SK-N-SH (cell line): ENCODE measurements at regions of chr19 and their contacts with region 1.

Region 1: GRCh38 chr19:50784710-50785109 is 5.5 kb upstream of the ACP4 start:
- DNase-seq: no peak
- H3K4me3 ChIP-seq: no peak overlapping the region
- H3K27ac ChIP-seq: no peak overlapping the region
- H3K4me1 ChIP-seq: no peaks in the 10 kb centered on the region
- H3K27me3 ChIP-seq: peaks cover 23% of the 10 kb centered on the region
- CTCF ChIP-seq: no peak
- EP300 ChIP-seq: no peak
- RAD21 ChIP-seq: no peak

Region 2: GRCh38 chr19:50476224-50476942 is 308.3 kb before region 1 on chr19 and contains the starts of genes EMC10 and GARIN5A:
- CTCF ChIA-PET with region 1: no interaction called
- POLR2A ChIA-PET with region 1: no interaction called
- DNase-seq: peak; percentile 100
- H3K4me3 ChIP-seq: peak within 1 kb of the TSS; percentile 83 to 93
- H3K27ac ChIP-seq: peak within 1 kb of the TSS; percentile 67 to 85
- H3K4me1 ChIP-seq: peaks cover 6 to 9% of the 10 kb centered on the region in 2 experiments; a peak in 2 of 4 replicates
- H3K27me3 ChIP-seq: no peaks in the 10 kb centered on the region
- CTCF ChIP-seq: no peak
- EP300 ChIP-seq: no peak
- RAD21 ChIP-seq: no peak
- polyA plus RNA-seq, gene EMC10: 218 and 219 TPM in 2 replicates
- polyA plus RNA-seq, gene GARIN5A: 1.1 and 1.3 TPM in 2 replicates

Region 3: GRCh38 chr19:50717026-50717723 is 67.5 kb before region 1 on chr19:
- CTCF ChIA-PET with region 1: interaction called, 113 read pairs
- POLR2A ChIA-PET with region 1: no interaction called
- DNase-seq: no peak
- H3K4me3 ChIP-seq: no peak overlapping the region
- H3K27ac ChIP-seq: no peak overlapping the region
- H3K4me1 ChIP-seq: peaks cover 0 to 4% of the 10 kb centered on the region in 2 experiments; a peak in 1 of 4 replicates
- H3K27me3 ChIP-seq: no peaks in the 10 kb centered on the region
- CTCF ChIP-seq: no peak
- EP300 ChIP-seq: no peak
- RAD21 ChIP-seq: no peak